ENCODE measurements at regions of chr11 and their contacts with region 1.

Region 1: DNA sequence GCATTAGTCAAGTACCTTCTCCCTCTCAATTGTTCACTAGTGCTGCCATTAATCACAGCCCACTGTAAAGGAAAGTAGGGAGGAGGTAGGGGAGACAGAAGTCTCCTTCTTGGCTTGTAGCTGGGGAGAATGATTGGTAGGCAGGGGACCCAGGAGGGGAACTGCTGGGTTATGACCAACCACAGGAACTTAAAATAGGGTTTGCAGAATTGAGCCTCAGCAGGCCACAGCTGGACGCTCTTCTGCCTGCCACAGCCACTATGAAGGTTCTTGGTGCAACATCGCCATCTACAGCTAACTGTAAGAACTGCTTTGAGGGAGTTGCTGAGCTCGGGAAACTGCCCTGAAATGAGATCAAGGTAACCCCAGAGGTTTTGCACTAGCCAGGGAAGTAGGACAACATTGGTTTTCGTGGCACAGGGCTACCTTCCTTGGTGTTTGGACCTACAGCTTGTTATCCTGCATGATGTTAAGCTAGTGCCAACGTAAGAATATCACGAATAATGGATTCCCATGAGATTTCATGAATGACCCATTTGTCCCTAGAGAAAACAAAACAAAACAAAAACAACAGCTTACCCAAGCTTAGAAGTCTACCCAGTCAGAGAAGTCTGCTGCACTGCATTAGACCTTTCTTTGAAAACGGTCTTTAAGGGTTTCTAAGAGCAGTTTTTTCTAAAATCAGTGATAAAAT is 787.1 kb upstream of the API5 start:
- DNase-seq: no peak
- ATAC-seq: no peak
- H3K4me3 ChIP-seq: no peak overlapping the region
- H3K27ac ChIP-seq: no peak overlapping the region
- H3K4me1 ChIP-seq: no peaks in the 10 kb centered on the region
- H3K27me3 ChIP-seq: no peaks in the 10 kb centered on the region
- CTCF ChIP-seq: peak in 3 of 5 experiments; percentile 34 to 44 (median 43)
- POLR2A ChIP-seq: no peak

Region 2: GRCh38 chr11:41461057-41461681 is 1063.5 kb before region 1 on chr11:
- in situ Hi-C with region 1: loop called in 1 of 4 experiments (anchors 10 kb)
- intact Hi-C with region 1: no loop called
- DNase-seq: no peak
- ATAC-seq: no peak
- H3K4me3 ChIP-seq: no peak overlapping the region
- H3K27ac ChIP-seq: no peak overlapping the region
- H3K4me1 ChIP-seq: no peaks in the 10 kb centered on the region
- H3K27me3 ChIP-seq: peaks cover 0 to 4% (median 2%) of the 10 kb centered on the region in 3 donors
- CTCF ChIP-seq: peak in 3 of 5 experiments; percentile 41 to 53 (median 49)
- POLR2A ChIP-seq: no peak

Measured in gastrocnemius medialis (tissue), 4 donors.